ENCODE measurements at regions of chr1 and their contacts with region 1.

Region 1: DNA sequence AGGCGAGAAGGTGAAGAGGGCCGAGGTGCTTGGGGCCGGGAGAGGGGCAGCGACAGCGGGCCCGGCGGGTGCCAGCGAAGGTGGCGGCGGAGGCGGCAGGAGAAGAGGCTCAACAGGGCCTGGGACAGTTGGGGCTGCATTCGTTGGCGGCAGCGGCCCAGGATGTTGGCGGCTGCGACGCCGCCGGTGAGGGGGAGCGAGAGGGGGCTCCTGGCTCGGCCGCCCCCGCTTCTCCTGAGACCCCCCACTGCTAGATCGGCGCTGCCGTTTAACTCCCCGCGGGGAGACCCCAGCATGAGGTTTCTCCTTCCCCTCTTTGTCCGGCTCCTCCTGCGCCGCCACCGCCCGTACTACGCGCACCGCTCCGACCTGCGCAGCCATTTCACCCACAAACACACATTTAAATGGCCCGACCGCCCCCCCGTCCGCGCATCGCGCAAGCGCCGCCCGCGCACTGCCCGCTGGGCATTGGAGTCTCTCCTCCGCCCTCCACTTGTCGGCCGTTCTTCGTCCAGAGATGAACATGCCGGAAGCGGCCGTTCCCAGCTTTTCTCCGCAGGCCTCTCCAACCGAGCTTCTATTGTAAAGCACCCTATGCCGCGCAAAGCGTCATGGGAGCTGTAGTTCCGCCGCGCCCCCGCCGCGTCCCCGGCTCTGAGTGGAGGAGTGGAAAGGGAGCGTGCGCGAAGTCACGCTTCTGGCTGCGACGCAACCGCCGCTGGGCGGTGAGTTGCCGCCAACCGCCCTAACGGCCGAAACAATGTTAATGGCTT is at the start of gene RSBN1:
- DNase-seq: peak; percentile 99 to 100 (median 99)

Region 2: DNA sequence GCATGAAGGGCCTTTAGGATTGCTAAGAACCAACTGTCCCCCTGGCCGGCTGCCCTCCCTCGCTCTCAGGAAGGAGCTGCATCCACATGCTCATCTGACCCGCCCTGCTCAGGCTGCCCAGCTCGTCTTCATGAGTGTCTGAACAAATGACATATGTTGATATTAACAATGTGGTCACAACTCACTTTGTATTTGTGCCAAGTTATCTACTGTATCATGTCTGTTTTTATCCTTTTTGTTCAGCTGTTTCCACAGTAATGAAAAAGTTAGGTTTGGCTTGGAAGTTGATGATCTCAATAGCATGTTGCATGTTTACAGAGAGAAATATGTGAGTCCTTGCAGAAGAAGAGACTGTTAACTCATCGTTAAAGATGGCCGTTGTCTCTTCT is 127.9 kb before region 1 on chr1:
- intact Hi-C with region 1: no loop called
- DNase-seq: peak in 1 of 10 donors; percentile 69

Region 3: GRCh38 chr1:113759333-113760101 is 52.6 kb before region 1 on chr1 and contains the start of gene PHTF1:
- intact Hi-C with region 1: loop called (anchors 5 kb)
- DNase-seq: peak; percentile 29 to 93 (median 57)

Region 4: GRCh38 chr1:113904674-113905434 is 92.8 kb after region 1 on chr1 and contains the starts of genes AP4B1 and DCLRE1B:
- intact Hi-C with region 1: loop called (anchors 1 kb)
- DNase-seq: peak; percentile 95 to 100 (median 97)

Region 5: GRCh38 chr1:113928941-113929749 is 117.1 kb after region 1 on chr1 and contains the start of gene HIPK1:
- intact Hi-C with region 1: loop called (anchors 1 kb)
- DNase-seq: peak; percentile 90 to 99 (median 94)

Region 6: DNA sequence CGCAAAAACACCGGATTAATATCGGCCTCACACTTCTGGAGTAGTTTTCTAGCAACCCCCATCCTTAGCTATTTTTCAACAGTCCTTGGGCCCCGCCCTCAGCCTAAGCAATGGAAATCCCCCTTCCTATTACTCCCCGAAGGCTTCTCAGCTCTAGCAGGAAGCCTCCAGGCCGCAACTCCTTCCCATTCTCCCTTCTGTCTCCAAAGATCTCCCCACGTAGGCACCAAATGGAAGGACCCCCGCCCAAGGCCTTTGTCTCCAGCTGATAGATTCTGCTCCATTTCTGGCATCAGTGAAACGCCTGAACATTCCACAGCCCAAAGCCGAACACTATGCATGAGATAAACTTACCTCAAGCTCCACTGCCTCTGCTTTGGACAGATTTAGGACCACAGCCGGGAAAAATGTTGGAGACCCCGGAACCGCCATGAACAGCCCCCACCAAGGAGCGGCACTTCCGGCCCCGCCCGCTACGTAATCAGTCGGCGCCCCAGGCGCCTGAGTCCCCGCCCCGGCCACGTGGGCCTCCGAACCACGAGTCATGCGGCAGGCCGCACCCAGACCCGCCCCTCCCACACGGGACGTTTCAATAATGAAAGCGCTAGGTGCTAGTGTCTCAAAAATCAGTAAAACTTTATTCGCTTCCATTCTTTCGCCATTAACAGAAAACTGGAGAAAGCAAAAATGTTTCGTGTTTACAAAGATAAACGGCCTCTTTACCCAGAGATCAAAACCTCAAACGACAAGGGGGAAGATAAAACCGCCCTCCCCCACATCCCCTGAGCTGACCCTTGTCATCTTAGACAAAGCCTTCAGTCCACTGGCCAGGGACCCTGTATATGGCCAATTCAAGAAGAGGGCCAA is 904.5 kb after region 1 on chr1 and contains the start of gene NRAS:
- intact Hi-C with region 1: loop called (anchors 5 kb)
- DNase-seq: peak; percentile 87 to 99 (median 94)

Measured in posterior cingulate gyrus (tissue), 11 donors.